Prostate gland (tissue), 2 donors: ENCODE measurements at regions of chr12 and their contacts with region 1.

Region 1: DNA sequence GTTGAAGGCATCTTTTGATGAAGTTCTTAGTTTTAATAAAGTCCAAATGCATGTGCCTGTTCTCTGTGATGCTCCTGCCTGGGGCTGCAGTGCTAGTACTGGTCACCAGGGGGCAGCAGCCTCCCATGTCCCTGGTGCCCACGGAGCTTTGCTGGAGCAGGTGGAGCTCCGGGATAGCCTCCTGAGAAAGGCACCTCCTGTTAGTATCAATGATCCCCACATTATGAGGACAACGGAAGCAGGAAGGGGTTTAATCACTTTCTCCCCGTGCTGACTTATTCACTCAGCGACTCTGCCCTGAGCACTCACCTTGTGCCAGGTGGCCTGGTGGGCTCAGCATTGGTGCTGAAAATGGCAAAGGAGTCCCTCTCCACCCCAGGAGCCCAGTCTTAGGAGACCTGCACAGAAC is 123.0 kb upstream of the PZP start:
- DNase-seq: peak; percentile 55
- H3K4me3 ChIP-seq: no peak overlapping the region
- H3K27ac ChIP-seq: no peak overlapping the region
- H3K4me1 ChIP-seq: no peaks in the 10 kb centered on the region
- H3K27me3 ChIP-seq: no peaks in the 10 kb centered on the region
- CTCF ChIP-seq: peak; percentile 64 to 91 (median 88)
- POLR2A ChIP-seq: no peak

Region 2: DNA sequence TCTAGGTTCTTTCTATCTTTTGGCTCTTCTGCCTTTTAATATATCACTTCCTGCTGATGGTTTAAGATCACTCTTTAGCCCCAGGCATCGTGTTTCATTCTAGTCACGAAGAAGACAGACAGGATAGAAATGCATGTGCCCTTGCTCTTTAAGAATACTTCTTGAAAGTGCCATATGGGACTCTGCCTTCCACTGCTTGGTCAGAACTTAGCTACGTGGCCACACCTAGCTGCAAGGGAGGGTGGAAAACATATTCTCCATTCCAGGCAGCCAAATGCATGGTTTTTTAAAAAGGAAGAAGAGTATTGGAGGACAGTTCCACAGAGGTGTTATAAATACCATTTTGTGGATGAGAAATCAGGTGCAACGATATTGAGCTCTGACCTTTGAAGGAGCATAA is 133.2 kb after region 1 on chr12:
- intact Hi-C with region 1: loop called (anchors 5 kb)
- DNase-seq: no peak
- H3K4me3 ChIP-seq: no peak overlapping the region
- H3K27ac ChIP-seq: no peak overlapping the region
- H3K4me1 ChIP-seq: no peaks in the 10 kb centered on the region
- H3K27me3 ChIP-seq: no peaks in the 10 kb centered on the region
- CTCF ChIP-seq: no peak
- POLR2A ChIP-seq: no peak

Region 3: DNA sequence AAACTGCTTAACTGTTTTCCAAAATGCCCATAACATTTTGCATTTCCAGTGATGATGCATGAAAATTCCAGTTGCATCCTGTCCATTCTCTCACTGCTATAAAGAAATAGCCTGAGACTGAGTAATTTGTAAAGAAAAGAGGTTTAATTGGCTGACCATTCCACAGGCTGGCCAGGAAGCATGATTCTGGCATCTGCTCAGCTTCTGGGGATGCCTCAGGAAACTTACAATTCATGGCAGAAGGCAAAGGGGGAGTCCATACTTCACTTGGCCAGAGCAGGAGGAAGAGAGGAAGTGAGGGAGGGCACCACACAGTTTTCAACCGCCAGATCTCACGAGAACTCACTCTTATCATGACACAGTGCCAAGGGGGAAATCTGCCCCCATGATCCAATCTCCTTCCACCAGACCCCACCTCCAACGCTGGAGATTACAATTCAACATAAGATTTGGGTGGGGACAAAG is 320.1 kb after region 1 on chr12:
- intact Hi-C with region 1: loop called (anchors 10 kb)
- DNase-seq: no peak
- H3K4me3 ChIP-seq: no peak overlapping the region
- H3K27ac ChIP-seq: peak overlapping the region; percentile 95
- H3K4me1 ChIP-seq: no peaks in the 10 kb centered on the region
- H3K27me3 ChIP-seq: no peaks in the 10 kb centered on the region
- CTCF ChIP-seq: no peak
- POLR2A ChIP-seq: no peak

Region 4: DNA sequence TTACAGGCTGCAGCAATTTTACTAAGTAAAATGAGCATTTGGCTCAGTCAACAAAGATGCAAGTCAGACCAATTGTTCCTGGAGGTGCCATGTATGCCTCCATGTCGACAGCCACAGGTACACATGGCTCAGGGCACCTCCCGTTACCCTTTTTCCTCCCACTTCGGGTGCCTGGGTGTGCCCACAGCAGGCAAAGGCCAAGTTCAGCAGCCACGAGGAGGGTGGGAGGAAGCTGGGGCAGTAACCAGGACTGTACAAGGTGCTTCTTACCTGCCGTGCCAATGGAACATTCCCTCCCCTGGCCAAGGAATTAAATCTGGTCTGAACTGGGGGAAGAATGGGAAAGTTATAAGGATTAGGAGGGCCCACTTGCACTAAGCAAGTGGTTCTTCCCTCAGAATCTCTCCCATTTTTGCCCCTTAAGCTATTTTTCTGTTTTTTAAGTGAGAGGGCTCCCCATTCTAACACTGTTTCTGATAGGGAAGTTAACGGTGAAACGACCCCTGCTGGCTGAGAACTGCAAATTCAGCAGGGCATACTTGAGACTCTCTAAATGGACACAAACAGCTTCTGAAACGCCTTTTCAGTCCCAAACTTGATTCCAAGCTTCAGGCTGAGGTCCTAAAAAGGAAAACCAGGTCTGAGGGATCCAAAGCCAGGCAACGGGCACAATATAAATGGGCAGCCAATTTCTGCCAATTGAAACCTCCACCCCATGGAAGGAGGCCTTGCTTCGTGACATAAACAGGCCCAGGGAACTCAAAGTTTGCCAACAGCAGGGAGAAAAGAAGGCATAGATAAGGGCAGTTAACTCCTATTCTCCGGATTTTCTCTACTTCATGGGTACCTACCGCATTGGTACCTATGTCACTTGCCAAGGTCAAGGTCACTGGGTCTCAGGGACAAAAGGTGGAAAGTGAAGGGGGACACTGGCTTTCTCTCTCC is 376.9 kb after region 1 on chr12:
- intact Hi-C with region 1: loop called (anchors 5 kb)
- DNase-seq: peak; percentile 17
- H3K4me3 ChIP-seq: no peak overlapping the region
- H3K27ac ChIP-seq: no peak overlapping the region
- H3K4me1 ChIP-seq: no peaks in the 10 kb centered on the region
- H3K27me3 ChIP-seq: no peaks in the 10 kb centered on the region
- CTCF ChIP-seq: peak; percentile 48 to 72 (median 62)
- POLR2A ChIP-seq: no peak